Calu3 (cell line): ENCODE measurements at regions of chr3 and their contacts with region 1.

Region 1: DNA sequence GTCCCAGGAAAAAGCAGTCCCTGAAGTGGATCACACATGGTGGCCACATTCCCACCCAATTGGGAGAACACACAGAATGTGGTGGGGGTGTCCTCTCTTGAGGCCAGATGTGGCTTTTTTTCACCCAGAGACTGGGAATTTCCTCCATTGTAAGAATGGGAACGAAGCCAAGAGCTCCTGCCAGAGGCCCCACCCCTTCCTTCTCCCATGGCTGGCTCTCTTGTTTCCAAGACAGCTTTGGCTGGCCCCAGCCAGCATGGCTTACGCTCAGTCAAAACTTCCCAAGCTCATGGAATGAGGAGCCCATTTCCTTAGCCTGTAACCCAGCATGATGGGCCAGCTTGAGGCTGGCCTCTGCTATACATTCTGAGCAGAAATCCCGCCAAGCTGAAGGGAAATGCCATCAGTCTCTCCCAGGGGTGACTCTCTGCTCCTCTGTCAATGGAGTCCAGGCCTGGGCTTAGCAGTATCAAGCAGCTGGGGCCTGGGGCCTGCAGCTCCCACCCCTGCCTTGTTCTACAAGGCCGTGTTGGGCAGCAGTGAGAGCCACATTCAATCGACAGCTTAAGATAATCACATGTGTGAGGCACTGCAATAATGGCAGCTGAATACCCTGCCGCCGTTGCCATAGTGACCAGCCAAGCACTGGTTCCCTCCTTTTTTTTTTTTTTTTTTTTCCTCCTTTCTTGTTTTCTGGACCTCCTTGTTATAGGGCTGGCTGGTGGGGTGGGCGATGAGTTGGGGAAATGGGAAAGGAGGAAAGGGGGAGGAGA is 142.4 kb downstream of the EPHB1 start:
- DNase-seq: no peak
- H3K4me3 Mint-ChIP-seq: no peak overlapping the region
- H3K27ac Mint-ChIP-seq: no peak overlapping the region
- H3K4me1 Mint-ChIP-seq: no peaks in the 10 kb centered on the region
- H3K27me3 Mint-ChIP-seq: peaks cover 17% of the 10 kb centered on the region
- CTCF ChIP-seq: no peak

Region 2: GRCh38 chr3:134790065-134790464 is 147.4 kb before region 1 on chr3:
- CTCF ChIA-PET with region 1: interaction called, 11 read pairs
- intact Hi-C with region 1: no loop called
- DNase-seq: no peak
- H3K4me3 Mint-ChIP-seq: no peak overlapping the region
- H3K27ac Mint-ChIP-seq: no peak overlapping the region
- H3K4me1 Mint-ChIP-seq: peaks cover 8% of the 10 kb centered on the region
- H3K27me3 Mint-ChIP-seq: peaks cover 75% of the 10 kb centered on the region
- CTCF ChIP-seq: no peak